ENCODE measurements at regions of chr2 and their contacts with region 1.

Region 1: GRCh38 chr2:31233741-31234682 is at the start of gene EHD3:
- DNase-seq: peak; percentile 77
- H3K4me3 Mint-ChIP-seq: peak within 1 kb of the TSS; percentile 75
- H3K27ac Mint-ChIP-seq: no peak within 1 kb of the TSS
- H3K4me1 Mint-ChIP-seq: peaks cover 12% of the 10 kb centered on the region
- H3K27me3 Mint-ChIP-seq: peaks cover 13% of the 10 kb centered on the region
- total RNA-seq, gene EHD3: 1.9 and 2.1 TPM in 2 replicates

Region 2: DNA sequence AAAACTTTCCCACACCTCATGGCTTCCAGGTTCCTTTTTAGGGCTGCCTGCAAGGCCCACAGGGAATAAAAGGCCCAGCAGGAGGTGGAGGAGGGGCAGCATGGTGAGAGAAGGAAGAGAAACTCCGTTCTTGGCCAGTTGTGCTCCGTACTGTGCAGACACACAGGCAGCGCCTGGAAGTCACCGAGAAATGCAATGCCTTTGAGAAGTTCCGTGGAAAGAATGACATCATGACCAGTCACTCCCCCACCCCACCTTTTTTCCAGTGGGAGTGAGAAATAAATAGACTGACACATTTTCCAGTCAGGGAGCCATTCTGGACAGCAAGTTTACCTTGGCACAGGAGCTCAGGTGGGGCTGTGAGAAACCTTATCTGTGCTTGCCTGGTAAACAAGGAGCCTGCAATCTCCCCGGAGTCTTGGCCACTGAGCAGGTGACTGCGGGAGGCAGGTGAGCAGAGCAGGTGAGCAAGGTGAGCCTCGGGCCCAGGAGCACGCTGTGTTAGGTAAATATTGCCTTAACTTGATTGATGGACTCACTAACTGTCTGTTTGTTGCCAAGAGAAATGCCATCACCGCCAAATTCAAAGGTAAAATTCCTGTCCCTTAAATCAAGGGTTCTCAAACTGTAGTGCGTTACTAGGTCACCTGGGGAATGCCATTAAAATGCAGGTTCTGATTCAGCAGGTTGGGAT is 1016.2 kb before region 1 on chr2:
- intact Hi-C with region 1: no loop called
- DNase-seq: no peak
- H3K4me3 Mint-ChIP-seq: no peak overlapping the region
- H3K27ac Mint-ChIP-seq: no peak overlapping the region
- H3K4me1 Mint-ChIP-seq: peaks cover 45% of the 10 kb centered on the region
- H3K27me3 Mint-ChIP-seq: no peaks in the 10 kb centered on the region

Region 3: GRCh38 chr2:31170071-31170698 is 63.8 kb before region 1 on chr2:
- intact Hi-C with region 1: loop called (anchors 5 kb)
- DNase-seq: peak; percentile 31
- H3K4me3 Mint-ChIP-seq: no peak overlapping the region
- H3K27ac Mint-ChIP-seq: no peak overlapping the region
- H3K4me1 Mint-ChIP-seq: no peaks in the 10 kb centered on the region
- H3K27me3 Mint-ChIP-seq: peaks cover 3% of the 10 kb centered on the region

Region 4: DNA sequence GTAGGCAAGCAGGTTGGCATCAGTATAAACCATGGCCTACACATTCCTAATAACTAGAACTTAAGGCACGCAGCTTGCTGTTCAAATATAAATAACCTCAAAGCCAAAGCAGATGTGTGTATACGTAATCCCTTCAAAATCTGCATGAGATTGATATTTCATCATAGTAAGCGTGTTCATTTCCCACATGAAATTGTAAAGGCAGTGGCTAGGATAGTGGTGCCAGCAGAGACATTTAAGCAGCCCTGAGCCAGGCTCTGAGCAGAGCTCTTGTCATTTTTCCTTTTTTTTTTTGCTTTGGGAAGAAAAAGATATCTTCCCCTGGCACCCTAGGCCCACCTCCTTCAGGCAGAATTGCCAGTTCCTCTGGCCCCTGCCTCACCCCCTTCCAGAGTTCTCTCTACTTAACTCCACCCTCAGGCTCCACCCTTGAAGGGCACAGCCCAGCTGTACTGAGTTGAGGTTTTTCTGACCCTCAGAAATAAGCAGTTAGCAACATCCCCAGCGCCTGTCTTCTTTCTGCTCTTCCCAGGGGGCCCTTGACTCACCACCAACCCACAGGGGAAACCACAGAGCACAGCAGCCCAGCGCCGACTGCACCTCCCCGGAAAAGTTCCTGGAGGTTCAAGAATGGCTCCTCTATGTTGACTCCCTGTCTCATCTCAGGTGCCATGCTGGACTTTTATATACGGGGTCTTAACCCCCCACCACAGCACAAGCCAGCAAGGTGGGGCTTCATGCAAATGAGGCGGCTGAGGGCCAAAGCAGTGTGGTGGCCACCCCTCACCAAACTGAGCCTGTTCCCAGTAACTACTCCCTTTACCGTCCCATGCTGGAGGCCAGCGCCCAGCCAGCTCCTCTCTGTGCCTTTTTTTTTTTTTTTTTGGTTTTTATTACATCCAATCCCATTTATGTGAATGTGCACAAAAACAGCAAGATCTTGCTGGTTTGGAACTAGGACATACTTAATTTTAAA is 84.6 kb after region 1 on chr2:
- intact Hi-C with region 1: loop called (anchors 1 kb)
- DNase-seq: peak; percentile 44
- H3K4me3 Mint-ChIP-seq: peak overlapping the region; percentile 43
- H3K27ac Mint-ChIP-seq: peak overlapping the region; percentile 54
- H3K4me1 Mint-ChIP-seq: peaks cover 58% of the 10 kb centered on the region
- H3K27me3 Mint-ChIP-seq: peaks cover 4% of the 10 kb centered on the region

Region 5: DNA sequence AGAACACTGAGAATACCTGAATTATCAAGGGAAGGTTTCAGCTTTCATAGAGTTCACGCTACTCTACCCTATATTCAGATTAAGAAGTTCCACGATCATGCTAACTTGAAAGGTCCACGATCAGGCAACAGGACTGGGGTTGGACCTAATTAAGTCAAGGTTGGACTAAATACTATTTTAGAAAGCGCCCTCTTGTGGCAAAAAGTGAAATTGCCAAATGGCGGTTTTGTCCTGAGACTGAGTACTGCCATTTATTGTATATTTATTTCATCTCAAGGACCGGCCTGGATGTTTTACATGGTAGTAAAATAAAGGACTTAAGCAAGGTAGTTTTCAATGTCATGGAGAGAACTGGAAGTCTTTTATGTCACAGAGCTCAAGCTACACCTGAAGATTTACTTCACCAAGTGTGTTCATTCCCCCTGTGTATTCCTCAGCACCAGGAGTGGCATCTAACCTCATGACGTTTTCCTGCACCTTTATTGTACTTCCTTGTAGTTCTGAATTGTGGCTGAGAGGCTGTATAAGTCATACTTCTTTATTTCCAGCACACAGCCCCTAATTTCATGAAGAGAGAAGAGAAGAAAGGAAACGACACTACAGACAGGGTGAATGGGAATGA is 290.0 kb after region 1 on chr2:
- intact Hi-C with region 1: loop called (anchors 2 kb)
- DNase-seq: peak; percentile 17
- H3K4me3 Mint-ChIP-seq: no peak overlapping the region
- H3K27ac Mint-ChIP-seq: no peak overlapping the region
- H3K4me1 Mint-ChIP-seq: no peaks in the 10 kb centered on the region
- H3K27me3 Mint-ChIP-seq: peaks cover 6% of the 10 kb centered on the region

Measured in activated T-helper 1 cell treated with anti-CD3 and anti-CD28 coated beads, Interleukin-12 subunit alpha, Interleukin-12 subunit beta, Interleukin-2, Interleukin-4 antibody, amounts not matched to agents 30 ng/mL and 10 ng/mL and 1 ng/mL, durations not matched to agents 14 hours and 24 hours and 36 hours (primary cell).